GM12878 (cell line): ENCODE measurements at regions of chr9 and their contacts with region 1.

Region 1: DNA sequence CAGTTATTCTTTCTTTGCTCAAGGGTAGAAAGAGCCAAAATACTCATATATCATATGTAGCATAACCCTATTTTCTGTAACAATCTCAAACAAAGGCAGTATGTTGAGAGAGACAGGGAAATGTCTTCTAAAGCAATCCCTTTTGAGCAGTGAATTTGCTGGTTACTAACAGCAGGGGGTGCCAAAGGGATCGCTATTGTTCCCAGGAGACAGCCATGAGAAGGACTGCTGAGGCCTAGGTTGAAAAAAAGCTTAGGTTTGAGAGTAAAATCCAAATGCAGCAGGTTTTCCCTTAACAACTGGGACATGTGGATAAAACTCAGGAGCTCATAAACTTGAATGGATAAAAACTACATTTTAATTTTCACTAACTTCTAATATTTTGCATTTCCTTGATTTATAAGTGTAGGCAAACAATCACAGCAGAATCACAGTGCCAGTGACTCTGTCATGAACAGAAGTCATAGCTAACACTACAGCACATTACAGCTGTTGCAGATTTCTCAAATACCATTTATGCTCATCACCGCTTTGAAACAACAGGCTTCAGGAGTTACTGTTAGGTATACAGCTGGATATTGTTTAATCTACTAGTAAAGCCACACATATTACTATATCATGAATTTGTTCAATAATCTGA is 148.4 kb downstream of the MAPKAP1 start:
- DNase-seq: peak; percentile 33
- ATAC-seq: peak; percentile 79
- H3K4me3 ChIP-seq: no peak overlapping the region
- H3K27ac ChIP-seq: no peak overlapping the region; the same call in 1 of the 2 replicates
- H3K4me1 ChIP-seq: peaks cover 28% of the 10 kb centered on the region
- H3K27me3 ChIP-seq: no peaks in the 10 kb centered on the region
- CTCF ChIP-seq: peak; percentile 79 to 90 (median 86)
- EP300 ChIP-seq: no peak
- POLR2A ChIP-seq: no peak
- RAD21 ChIP-seq: peak; percentile 91

Region 2: DNA sequence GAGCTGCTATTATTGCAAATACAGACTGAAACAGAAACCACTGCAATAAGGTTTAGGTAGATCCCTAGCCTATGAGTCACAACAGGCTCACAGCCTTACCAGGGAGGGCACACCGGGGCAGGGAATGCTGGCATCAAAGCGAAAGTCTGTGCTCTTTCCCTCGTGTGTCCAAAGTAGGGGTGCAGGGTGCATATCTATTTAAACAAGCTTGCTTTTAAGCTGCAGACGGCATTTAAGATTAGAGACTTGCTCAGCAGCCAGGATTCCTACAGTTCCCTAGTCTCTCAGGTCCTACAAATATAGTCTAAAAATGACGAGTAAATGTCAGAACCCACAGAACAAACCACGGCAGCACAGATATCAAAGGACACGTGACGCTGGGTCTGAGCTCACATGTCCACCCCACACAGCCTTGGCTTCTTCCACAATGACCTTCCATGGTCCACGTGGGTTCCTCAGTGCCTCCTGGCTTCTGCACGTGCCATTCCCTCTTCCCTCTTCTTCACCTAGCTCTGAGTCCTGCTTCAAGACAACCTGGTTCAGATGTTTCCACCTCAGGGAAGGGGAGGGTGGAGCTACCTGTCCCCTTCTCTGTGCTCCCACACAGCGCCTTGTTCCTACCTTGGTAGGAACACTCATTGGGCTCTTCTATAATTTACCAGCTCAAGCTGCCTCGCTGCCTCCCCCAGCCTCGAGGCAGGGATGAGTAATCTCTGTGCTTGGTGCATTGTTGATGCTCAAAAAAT is 44.7 kb before region 1 on chr9:
- CTCF ChIA-PET with region 1: interaction called, 10 read pairs
- POLR2A ChIA-PET with region 1: interaction called, 3 read pairs
- RAD21 ChIA-PET with region 1: interaction called, 3 read pairs
- SMC1A ChIA-PET with region 1: interaction called, 4 read pairs
- in situ Hi-C with region 1: no loop called
- intact Hi-C with region 1: no loop called
- DNase-seq: peak; percentile 59
- ATAC-seq: peak; percentile 99
- H3K4me3 ChIP-seq: peak overlapping the region; percentile 19
- H3K27ac ChIP-seq: peak overlapping the region; percentile 67
- H3K4me1 ChIP-seq: peaks cover 15% of the 10 kb centered on the region
- H3K27me3 ChIP-seq: no peaks in the 10 kb centered on the region
- CTCF ChIP-seq: no peak
- EP300 ChIP-seq: no peak
- POLR2A ChIP-seq: no peak
- RAD21 ChIP-seq: no peak

Region 3: GRCh38 chr9:125574126-125574877 is 15.7 kb after region 1 on chr9:
- CTCF ChIA-PET with region 1: interaction called, 16 read pairs
- POLR2A ChIA-PET with region 1: interaction called, 3 read pairs
- RAD21 ChIA-PET with region 1: interaction called, 3 read pairs
- SMC1A ChIA-PET with region 1: interaction called, 13 read pairs
- in situ Hi-C with region 1: no loop called
- intact Hi-C with region 1: no loop called
- DNase-seq: no peak
- ATAC-seq: no peak
- H3K4me3 ChIP-seq: no peak overlapping the region
- H3K27ac ChIP-seq: no peak overlapping the region
- H3K4me1 ChIP-seq: no peaks in the 10 kb centered on the region
- H3K27me3 ChIP-seq: no peaks in the 10 kb centered on the region
- CTCF ChIP-seq: no peak
- EP300 ChIP-seq: no peak
- POLR2A ChIP-seq: no peak
- RAD21 ChIP-seq: no peak

Region 4: GRCh38 chr9:125626187-125626586 is 67.6 kb after region 1 on chr9:
- CTCF ChIA-PET with region 1: interaction called, 60 read pairs
- POLR2A ChIA-PET with region 1: interaction called, 7 read pairs
- RAD21 ChIA-PET with region 1: interaction called, 75 read pairs
- SMC1A ChIA-PET with region 1: interaction called, 93 read pairs
- in situ Hi-C with region 1: loop called (anchors 5 kb)
- intact Hi-C with region 1: loop called (anchors 1 kb)
- DNase-seq: no peak
- ATAC-seq: peak; percentile 6; the same call in 1 of the 3 replicates
- H3K4me3 ChIP-seq: no peak overlapping the region
- H3K27ac ChIP-seq: no peak overlapping the region
- H3K4me1 ChIP-seq: peaks cover 38% of the 10 kb centered on the region
- H3K27me3 ChIP-seq: no peaks in the 10 kb centered on the region
- CTCF ChIP-seq: no peak
- EP300 ChIP-seq: no peak
- POLR2A ChIP-seq: no peak
- RAD21 ChIP-seq: no peak

Region 5: GRCh38 chr9:125706661-125707471 is 148.3 kb after region 1 on chr9 and contains the start of gene MAPKAP1:
- CTCF ChIA-PET with region 1: interaction called, 11 read pairs
- POLR2A ChIA-PET with region 1: interaction called, 7 read pairs
- RAD21 ChIA-PET with region 1: interaction called, 17 read pairs
- SMC1A ChIA-PET with region 1: interaction called, 12 read pairs
- in situ Hi-C with region 1: no loop called
- intact Hi-C with region 1: loop called (anchors 5 kb)
- DNase-seq: peak; percentile 81
- ATAC-seq: peak; percentile 94
- H3K4me3 ChIP-seq: peak within 1 kb of the TSS; percentile 90
- H3K27ac ChIP-seq: peak within 1 kb of the TSS; percentile 69
- H3K4me1 ChIP-seq: peaks cover 17% of the 10 kb centered on the region
- H3K27me3 ChIP-seq: no peaks in the 10 kb centered on the region
- CTCF ChIP-seq: no peak
- EP300 ChIP-seq: no peak
- POLR2A ChIP-seq: peak; percentile 95
- RAD21 ChIP-seq: no peak
- polyA plus RNA-seq, gene MAPKAP1: 5.1 to 11.7 TPM

Region 6: DNA sequence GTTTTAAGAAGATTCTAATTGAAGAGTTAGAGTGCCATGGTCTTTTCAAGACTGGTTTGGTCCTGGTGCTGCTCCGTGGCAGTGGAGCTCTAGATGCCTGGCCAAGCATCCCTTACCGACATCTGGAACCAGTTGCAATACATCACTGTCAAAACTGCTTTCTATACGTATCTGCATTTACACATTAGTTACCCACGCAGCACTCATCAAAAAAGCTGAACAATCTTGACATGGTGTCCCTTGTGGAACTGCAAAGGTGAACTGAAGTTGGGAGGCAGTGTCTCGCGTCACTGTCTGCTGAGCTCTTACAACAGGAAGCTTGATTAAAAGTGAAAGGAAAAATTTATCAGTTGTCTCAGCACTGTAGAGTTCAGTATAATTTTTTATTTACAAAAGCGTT is 271.2 kb after region 1 on chr9:
- CTCF ChIA-PET with region 1: interaction called, 3 read pairs
- POLR2A ChIA-PET with region 1: no interaction called
- RAD21 ChIA-PET with region 1: no interaction called
- SMC1A ChIA-PET with region 1: interaction called, 13 read pairs
- in situ Hi-C with region 1: no loop called
- intact Hi-C with region 1: no loop called
- DNase-seq: peak; percentile 54
- ATAC-seq: peak; percentile 95
- H3K4me3 ChIP-seq: peak overlapping the region; percentile 44
- H3K27ac ChIP-seq: peak overlapping the region; percentile 15; the same call in 1 of the 2 replicates
- H3K4me1 ChIP-seq: no peaks in the 10 kb centered on the region; the same call in 1 of the 2 replicates
- H3K27me3 ChIP-seq: no peaks in the 10 kb centered on the region
- CTCF ChIP-seq: no peak
- EP300 ChIP-seq: no peak
- POLR2A ChIP-seq: peak; percentile 34; the same call in 1 of the 2 replicates
- RAD21 ChIP-seq: no peak